ENCODE measurements at regions of chr14 and their contacts with region 1.

Region 1: GRCh38 chr14:102020058-102020971 is 55.9 kb downstream of the DYNC1H1 start:
- DNase-seq: peak; percentile 89
- H3K4me3 ChIP-seq: no peak overlapping the region
- H3K27ac ChIP-seq: no peak overlapping the region
- H3K4me1 ChIP-seq: peaks cover 11% of the 10 kb centered on the region
- H3K27me3 ChIP-seq: no peaks in the 10 kb centered on the region
- CTCF ChIP-seq: no peak

Region 2: GRCh38 chr14:101992708-101993107 is 27.6 kb before region 1 on chr14:
- CTCF ChIA-PET with region 1: interaction called, 11 read pairs
- dilution Hi-C with region 1: no loop called
- in situ Hi-C with region 1: no loop called
- intact Hi-C with region 1: no loop called
- DNase-seq: no peak
- H3K4me3 ChIP-seq: no peak overlapping the region
- H3K27ac ChIP-seq: no peak overlapping the region
- H3K4me1 ChIP-seq: no peaks in the 10 kb centered on the region
- H3K27me3 ChIP-seq: no peaks in the 10 kb centered on the region
- CTCF ChIP-seq: no peak

Measured in mammary epithelial cell (primary cell).